OCI-LY7 (cell line): ENCODE measurements at regions of chr16 and their contacts with region 1.

Region 1: DNA sequence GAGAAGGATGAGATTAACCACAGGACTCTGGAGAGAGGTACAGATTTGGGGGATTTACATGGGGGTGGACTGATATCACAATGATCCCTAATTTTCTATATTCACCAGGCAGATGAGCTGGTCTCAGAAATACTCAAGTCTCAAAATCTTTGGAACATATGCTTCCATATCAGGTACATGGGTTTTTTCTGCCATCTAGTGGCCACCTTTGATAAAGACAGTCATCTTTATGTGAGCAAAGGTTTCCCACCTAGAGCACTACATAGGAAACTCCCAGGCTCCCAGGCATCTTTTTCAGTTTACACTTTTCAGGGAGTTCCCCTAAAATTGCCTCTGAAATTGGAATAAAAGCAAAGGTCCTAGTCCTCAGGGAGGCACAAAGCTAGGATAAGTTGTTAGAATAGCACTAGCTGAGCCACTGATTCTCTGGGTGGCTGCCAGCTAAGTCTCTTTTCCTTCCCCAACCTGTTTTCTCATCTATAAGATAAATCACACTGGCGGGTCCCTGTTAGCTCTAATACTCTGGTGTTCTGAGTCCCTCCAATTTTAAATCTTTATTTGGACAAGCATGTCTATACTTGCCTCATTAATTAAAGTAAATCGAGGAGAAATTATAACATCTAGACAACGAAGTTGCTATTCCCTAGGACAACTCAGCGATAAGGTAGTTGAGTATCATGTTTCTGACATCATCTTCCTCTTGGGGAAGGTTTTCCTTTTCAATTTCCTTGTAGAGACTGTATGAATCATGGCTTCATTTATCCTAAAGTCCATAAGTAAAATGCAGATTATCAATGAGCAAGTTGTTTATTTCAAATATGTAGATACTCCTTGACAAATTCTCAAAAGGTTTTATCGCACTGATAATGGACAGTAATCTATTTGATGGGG is 19.0 kb upstream of the MON1B start:
- DNase-seq: peak; percentile 69
- H3K4me3 ChIP-seq: no peak overlapping the region
- H3K27ac ChIP-seq: no peak overlapping the region
- H3K4me1 ChIP-seq: peaks cover 5% of the 10 kb centered on the region
- CTCF ChIP-seq: peak; percentile 88

Region 2: DNA sequence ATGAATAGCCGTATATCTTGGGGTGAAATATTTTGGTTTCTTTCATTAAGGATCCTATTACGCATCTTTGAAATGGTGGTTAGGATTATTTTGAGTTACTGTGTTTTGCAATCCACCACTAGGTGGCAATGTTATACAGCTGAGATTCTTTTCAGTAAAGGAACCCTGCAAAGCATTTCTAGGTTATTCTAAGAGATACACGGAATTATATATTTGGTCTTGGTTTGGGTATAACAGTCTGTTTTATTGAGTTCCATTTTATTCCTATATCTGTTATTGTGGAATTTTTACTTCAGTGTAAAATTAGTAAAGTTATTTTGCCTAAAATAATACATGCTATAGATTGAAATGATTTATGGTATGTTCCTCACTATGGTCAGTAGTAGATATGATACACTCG is 1382.8 kb before region 1 on chr16:
- CTCF ChIA-PET with region 1: no interaction called
- POLR2A ChIA-PET with region 1: no interaction called
- intact Hi-C with region 1: loop called (anchors 5 kb)
- DNase-seq: peak; percentile 70
- H3K4me3 ChIP-seq: no peak overlapping the region
- H3K27ac ChIP-seq: no peak overlapping the region
- H3K4me1 ChIP-seq: peaks cover 19% of the 10 kb centered on the region
- CTCF ChIP-seq: peak; percentile 97

Region 3: DNA sequence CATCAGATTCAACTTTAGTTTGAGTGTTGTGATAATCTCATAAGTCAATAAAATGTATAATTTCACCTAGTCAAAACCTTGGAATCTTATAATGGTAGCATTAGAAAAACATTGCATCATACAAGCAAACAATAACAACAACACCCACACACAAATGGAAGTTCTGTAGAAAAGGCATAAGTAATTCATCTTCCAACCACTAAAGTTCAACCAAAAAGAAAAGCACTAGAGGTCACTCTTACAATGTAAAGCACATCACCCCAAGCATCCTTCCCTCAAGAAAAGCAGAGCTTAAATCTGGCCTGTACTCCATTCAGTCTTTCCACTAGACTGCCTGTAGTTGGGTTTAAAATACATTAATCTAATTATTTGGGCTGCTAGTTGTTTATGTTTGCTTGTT is 893.0 kb before region 1 on chr16:
- CTCF ChIA-PET with region 1: no interaction called
- POLR2A ChIA-PET with region 1: no interaction called
- intact Hi-C with region 1: loop called (anchors 10 kb)
- DNase-seq: peak; percentile 45
- H3K4me3 ChIP-seq: no peak overlapping the region
- H3K27ac ChIP-seq: no peak overlapping the region
- H3K4me1 ChIP-seq: no peaks in the 10 kb centered on the region
- CTCF ChIP-seq: peak; percentile 75

Region 4: GRCh38 chr16:76668207-76668725 is 503.7 kb before region 1 on chr16:
- CTCF ChIA-PET with region 1: no interaction called
- POLR2A ChIA-PET with region 1: no interaction called
- intact Hi-C with region 1: loop called (anchors 5 kb)
- DNase-seq: peak; percentile 23
- H3K4me3 ChIP-seq: no peak overlapping the region
- H3K27ac ChIP-seq: no peak overlapping the region
- H3K4me1 ChIP-seq: no peaks in the 10 kb centered on the region
- CTCF ChIP-seq: peak; percentile 39

Region 5: DNA sequence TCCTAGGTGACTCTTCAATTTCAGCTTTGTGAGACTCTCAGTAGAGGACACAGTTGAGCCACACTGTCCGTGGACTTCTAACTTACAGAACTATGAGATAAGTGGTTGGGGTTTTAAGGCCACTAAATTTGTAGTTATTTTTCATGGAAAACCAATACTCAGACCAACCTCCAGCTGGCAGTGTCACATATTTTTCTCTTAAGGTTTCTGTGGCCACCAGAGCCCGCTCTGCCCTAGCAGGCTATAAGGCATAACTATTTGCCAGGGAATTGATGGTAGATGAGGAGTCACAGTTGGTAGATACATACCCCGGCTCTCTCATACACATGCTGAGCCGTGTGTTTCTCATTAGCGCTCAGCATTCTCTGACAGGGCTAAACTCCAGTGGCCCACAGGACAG is 317.8 kb before region 1 on chr16:
- CTCF ChIA-PET with region 1: no interaction called
- POLR2A ChIA-PET with region 1: no interaction called
- intact Hi-C with region 1: loop called (anchors 1 kb)
- DNase-seq: peak; percentile 38
- H3K4me3 ChIP-seq: no peak overlapping the region
- H3K27ac ChIP-seq: no peak overlapping the region
- H3K4me1 ChIP-seq: no peaks in the 10 kb centered on the region
- CTCF ChIP-seq: peak; percentile 68

Region 6: GRCh38 chr16:77043076-77043475 is 128.9 kb before region 1 on chr16:
- CTCF ChIA-PET with region 1: no interaction called
- POLR2A ChIA-PET with region 1: no interaction called
- intact Hi-C with region 1: loop called (anchors 1 kb)
- DNase-seq: peak; percentile 69
- H3K4me3 ChIP-seq: no peak overlapping the region
- H3K27ac ChIP-seq: no peak overlapping the region
- H3K4me1 ChIP-seq: no peaks in the 10 kb centered on the region
- CTCF ChIP-seq: peak; percentile 87